ENCODE measurements at regions of chr15 and their contacts with region 1.

Region 1: GRCh38 chr15:47717036-47717611 is at the start of gene SEMA6D:
- DNase-seq: peak; percentile 31 to 79
- H3K4me3 ChIP-seq: peak within 1 kb of the TSS; percentile 72 to 84 (median 78)
- H3K27ac ChIP-seq: no peak within 1 kb of the TSS
- H3K4me1 ChIP-seq: peaks cover 1 to 7% (median 4%) of the 10 kb centered on the region in 4 experiments; a peak in 3 of 7 replicates
- H3K27me3 ChIP-seq: peaks cover 0 to 23% (median 17%) of the 10 kb centered on the region in 4 experiments; a peak in 6 of 7 replicates
- CTCF ChIP-seq: peak in 2 of 3 experiments; percentile 39 to 49; a peak in 3 of 4 replicates
- EP300 ChIP-seq: no peak
- POLR2A ChIP-seq: no peak
- RAD21 ChIP-seq: peak in 1 of 2 experiments; percentile 21; a peak in 2 of 4 replicates
- total RNA-seq, gene SEMA6D: 2.2 and 3.7 TPM in 2 replicates

Region 2: DNA sequence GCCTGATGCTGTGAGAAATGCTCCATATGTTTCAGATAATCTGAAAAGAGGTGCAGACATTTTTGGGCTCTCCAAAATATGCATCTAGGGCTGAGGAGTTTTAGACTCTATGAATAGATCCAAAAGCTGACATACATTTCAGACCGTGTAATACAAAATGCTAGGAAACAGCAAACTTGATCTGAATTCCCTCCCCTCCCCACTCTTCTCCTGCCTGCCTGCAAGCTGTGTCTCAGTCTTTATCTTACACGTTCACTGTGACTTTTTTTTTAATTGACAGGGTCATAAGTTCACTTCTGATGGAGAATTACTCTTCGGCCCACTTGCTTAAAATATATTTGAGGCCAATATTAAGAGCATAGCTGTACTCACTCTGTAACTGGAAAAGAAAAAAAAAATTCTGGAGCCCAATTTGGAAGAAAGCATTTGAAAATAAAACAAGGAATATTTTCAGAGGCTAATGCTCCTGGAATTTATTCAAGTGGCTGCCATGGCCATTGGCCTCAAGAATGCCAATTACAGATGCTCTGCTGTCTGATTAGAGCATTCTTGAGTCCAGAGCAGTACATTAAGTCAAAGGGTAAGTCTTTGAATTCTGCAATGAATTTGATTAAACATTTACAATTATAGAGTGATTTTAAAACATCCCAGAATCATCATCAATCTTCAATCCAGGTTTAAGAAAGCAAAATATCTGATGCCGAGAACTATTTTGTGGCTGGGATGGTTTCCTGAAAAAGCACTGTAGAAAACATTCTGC is 146.1 kb before region 1 on chr15:
- CTCF ChIA-PET with region 1: no interaction called
- POLR2A ChIA-PET with region 1: no interaction called
- DNase-seq: no peak
- H3K4me3 ChIP-seq: no peak overlapping the region
- H3K27ac ChIP-seq: no peak overlapping the region
- H3K4me1 ChIP-seq: no peaks in the 10 kb centered on the region
- H3K27me3 ChIP-seq: no peaks in the 10 kb centered on the region
- CTCF ChIP-seq: no peak
- EP300 ChIP-seq: no peak
- POLR2A ChIP-seq: no peak
- RAD21 ChIP-seq: no peak

Region 3: DNA sequence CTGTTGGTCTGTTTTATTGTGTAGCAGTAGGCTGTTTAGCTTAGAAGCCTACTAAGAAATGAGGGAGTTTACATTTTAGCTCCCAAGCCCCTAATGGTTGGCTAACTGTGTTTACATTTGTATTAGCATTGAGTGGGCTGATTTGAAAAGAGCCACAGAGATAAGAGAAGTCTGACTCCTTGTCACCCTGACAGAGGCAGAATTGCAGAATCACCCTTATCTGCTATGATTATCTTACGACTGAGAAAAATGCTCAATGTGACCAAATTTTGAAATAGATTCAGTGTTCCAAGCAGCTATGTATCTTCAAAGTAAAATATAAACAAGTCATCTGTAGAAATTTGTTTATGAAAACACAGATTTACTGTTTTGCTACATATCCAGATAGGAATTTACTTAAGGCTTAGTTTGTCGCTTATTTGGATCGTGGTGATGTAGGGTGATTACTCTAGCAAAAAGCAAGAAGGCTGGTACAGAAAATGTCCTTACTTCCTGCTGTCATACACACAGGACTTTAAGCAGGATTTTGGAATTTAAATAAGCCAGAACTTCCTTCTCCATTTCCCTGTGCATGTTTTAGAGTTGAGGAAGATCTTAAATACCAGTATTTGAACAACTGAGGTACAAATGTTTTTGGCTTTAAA is 19.1 kb after region 1 on chr15:
- CTCF ChIA-PET with region 1: interaction called, 16 read pairs
- POLR2A ChIA-PET with region 1: interaction called, 3 read pairs
- DNase-seq: no peak
- H3K4me3 ChIP-seq: no peak overlapping the region
- H3K27ac ChIP-seq: no peak overlapping the region
- H3K4me1 ChIP-seq: peaks cover 0 to 7% (median 2%) of the 10 kb centered on the region in 4 experiments; a peak in 4 of 7 replicates
- H3K27me3 ChIP-seq: no peaks in the 10 kb centered on the region
- CTCF ChIP-seq: no peak
- EP300 ChIP-seq: no peak
- POLR2A ChIP-seq: no peak
- RAD21 ChIP-seq: no peak